Sigmoid colon (tissue), 7 donors: ENCODE measurements at regions of chr12 and their contacts with region 1.

Region 1: GRCh38 chr12:57520053-57520871 is at the start of gene DDIT3:
- DNase-seq: peak; percentile 100
- H3K4me3 ChIP-seq: peak within 1 kb of the TSS; percentile 85 to 96 (median 89)
- H3K27ac ChIP-seq: peak within 1 kb of the TSS; percentile 95 to 100 (median 98)
- H3K4me1 ChIP-seq: peaks cover 0 to 66% (median 64%) of the 10 kb centered on the region in 4 donors
- H3K27me3 ChIP-seq: no peaks in the 10 kb centered on the region
- CTCF ChIP-seq: no peak
- EP300 ChIP-seq: peak in 2 of 4 donors; percentile 7 to 82
- POLR2A ChIP-seq: peak; percentile 99
- total RNA-seq, gene DDIT3: 30.7 to 48.5 (median 40.7) TPM

Region 2: GRCh38 chr12:57487597-57488401 is 32.5 kb before region 1 on chr12 and contains the start of gene MARS1:
- intact Hi-C with region 1: loop called (anchors 5 kb)
- DNase-seq: peak; percentile 98
- H3K4me3 ChIP-seq: peak within 1 kb of the TSS; percentile 80 to 97 (median 92)
- H3K27ac ChIP-seq: peak within 1 kb of the TSS; percentile 81 to 87 (median 86)
- H3K4me1 ChIP-seq: peaks cover 0 to 22% (median 13%) of the 10 kb centered on the region in 4 donors
- H3K27me3 ChIP-seq: no peaks in the 10 kb centered on the region
- CTCF ChIP-seq: no peak
- EP300 ChIP-seq: peak in 1 of 4 donors; percentile 83
- POLR2A ChIP-seq: peak; percentile 47 to 65
- total RNA-seq, gene MARS1: 46.6 to 56.3 (median 53.2) TPM

Region 3: GRCh38 chr12:57611108-57611809 is 91.0 kb after region 1 on chr12 and contains the start of gene ARHGEF25:
- intact Hi-C with region 1: loop called (anchors 5 kb)
- DNase-seq: peak; percentile 93
- H3K4me3 ChIP-seq: peak within 1 kb of the TSS; percentile 67 to 95 (median 86)
- H3K27ac ChIP-seq: peak within 1 kb of the TSS; percentile 96 to 97 (median 96)
- H3K4me1 ChIP-seq: peaks cover 0 to 76% (median 67%) of the 10 kb centered on the region in 4 donors
- H3K27me3 ChIP-seq: no peaks in the 10 kb centered on the region
- CTCF ChIP-seq: no peak
- EP300 ChIP-seq: no peak
- POLR2A ChIP-seq: peak; percentile 63 to 64
- total RNA-seq, gene ARHGEF25: 99.4 to 140 (median 113) TPM